ENCODE measurements at regions of chr9 and their contacts with region 1.

Region 1: DNA sequence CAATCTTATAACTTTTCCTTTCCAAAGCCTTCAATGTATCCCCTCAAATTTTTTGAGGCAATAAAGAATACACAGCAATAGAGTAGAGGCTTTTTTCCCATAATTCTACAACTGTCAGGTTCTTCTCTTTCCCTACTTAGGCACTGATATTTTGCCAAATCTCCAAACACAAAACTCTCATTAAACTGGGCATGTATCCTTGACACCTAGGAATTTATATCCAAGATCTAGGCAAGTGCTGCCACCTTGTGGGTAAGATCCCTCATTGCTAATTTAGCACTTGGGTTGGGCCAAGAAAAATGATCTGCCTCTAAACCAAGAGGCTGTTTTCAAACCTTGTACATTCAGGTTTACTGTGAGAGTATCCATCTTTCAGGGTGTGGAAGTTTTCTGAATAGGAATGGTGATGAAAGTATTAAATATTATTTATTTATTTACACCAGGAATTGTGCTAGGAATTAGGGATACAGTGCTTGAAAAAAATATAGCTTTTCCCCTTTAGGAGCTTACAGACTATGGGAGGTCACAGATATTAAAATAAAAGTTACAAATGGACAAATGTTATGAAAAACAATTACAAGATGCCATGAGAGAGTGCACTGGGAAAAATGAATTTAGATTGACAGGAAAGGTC is 17.6 kb downstream of the TSTD2 start:
- DNase-seq: peak; percentile 72
- ATAC-seq: peak; percentile 44
- H3K4me3 Mint-ChIP-seq: no peak overlapping the region
- H3K27ac Mint-ChIP-seq: no peak overlapping the region
- H3K4me1 Mint-ChIP-seq: peaks cover 21% of the 10 kb centered on the region
- H3K27me3 Mint-ChIP-seq: no peaks in the 10 kb centered on the region
- CTCF ChIP-seq: peak; percentile 86

Region 2: DNA sequence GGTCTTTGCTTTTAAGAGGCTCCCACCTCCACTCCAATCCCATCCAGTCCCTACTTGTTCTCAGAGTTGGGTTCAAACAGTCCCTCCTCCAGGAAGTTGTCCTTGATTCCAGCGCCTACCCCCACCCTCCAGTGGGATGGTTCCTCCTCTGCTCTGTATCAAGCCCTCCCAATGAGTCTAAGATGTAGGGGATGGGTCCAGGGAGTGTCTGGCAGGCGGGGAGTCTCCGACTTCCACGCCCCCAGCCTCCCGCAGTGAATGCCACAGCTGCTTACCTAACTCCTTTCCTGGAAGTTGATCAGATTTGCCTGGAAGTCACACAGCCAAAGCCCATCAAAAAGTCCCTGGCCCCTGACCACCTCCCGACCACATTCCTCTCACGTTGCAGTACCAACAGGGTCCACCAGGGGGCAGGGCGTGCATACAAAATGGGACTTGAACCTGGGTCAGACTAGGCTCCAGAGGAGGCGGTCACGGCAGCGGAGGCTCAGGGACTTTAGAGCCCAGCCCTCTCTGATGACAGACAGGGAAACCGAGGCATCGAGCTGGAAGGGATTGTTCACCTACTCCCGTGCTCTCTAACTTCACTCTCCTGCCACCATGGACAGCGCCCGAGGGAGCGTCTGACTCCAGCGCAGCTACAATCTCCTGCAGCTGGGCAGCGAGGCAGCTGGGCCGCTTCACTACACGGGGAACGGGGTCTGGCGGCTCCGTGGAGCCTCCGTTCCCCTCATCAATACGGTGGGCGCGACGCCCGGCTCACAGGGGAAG is 228.6 kb before region 1 on chr9:
- CTCF ChIA-PET with region 1: interaction called, 24 read pairs
- POLR2A ChIA-PET with region 1: no interaction called
- intact Hi-C with region 1: no loop called
- DNase-seq: peak; percentile 87
- ATAC-seq: peak; percentile 68
- H3K4me3 Mint-ChIP-seq: no peak overlapping the region
- H3K27ac Mint-ChIP-seq: no peak overlapping the region
- H3K4me1 Mint-ChIP-seq: peaks cover 12% of the 10 kb centered on the region
- H3K27me3 Mint-ChIP-seq: peaks cover 7% of the 10 kb centered on the region
- CTCF ChIP-seq: peak; percentile 98

Region 3: DNA sequence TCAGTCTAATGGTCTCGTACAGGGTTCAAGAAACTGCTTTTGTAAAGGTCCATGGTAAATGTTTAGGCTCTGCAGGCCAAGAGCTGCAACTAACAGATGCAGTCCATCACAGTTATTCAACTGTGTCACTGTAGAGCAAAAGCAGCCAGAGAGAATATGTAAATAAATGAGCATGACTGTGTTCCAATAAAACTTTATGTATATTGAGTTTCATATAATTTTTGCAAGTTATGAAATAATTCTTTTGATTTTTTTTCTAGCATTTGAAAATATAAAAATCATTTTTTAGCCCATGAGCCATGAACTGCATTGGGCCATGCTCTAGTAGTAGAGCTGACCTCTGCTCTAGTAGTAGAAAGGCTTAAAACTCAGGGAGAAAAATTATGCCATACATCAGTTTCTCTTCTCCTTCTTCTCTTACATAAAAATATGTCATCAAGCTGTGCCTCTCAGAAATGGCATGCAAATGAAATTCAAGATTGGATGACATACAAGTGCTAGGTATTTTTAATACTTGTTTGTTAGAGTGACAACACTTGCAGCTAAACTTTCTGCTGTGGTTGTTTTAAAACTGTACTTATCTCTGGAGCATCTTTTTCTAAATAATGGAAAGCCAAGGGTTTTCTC is 156.3 kb before region 1 on chr9:
- CTCF ChIA-PET with region 1: interaction called, 11 read pairs
- POLR2A ChIA-PET with region 1: no interaction called
- intact Hi-C with region 1: no loop called
- DNase-seq: no peak
- ATAC-seq: no peak
- H3K4me3 Mint-ChIP-seq: no peak overlapping the region
- H3K27ac Mint-ChIP-seq: no peak overlapping the region
- H3K4me1 Mint-ChIP-seq: no peaks in the 10 kb centered on the region
- H3K27me3 Mint-ChIP-seq: no peaks in the 10 kb centered on the region
- CTCF ChIP-seq: no peak

Region 4: DNA sequence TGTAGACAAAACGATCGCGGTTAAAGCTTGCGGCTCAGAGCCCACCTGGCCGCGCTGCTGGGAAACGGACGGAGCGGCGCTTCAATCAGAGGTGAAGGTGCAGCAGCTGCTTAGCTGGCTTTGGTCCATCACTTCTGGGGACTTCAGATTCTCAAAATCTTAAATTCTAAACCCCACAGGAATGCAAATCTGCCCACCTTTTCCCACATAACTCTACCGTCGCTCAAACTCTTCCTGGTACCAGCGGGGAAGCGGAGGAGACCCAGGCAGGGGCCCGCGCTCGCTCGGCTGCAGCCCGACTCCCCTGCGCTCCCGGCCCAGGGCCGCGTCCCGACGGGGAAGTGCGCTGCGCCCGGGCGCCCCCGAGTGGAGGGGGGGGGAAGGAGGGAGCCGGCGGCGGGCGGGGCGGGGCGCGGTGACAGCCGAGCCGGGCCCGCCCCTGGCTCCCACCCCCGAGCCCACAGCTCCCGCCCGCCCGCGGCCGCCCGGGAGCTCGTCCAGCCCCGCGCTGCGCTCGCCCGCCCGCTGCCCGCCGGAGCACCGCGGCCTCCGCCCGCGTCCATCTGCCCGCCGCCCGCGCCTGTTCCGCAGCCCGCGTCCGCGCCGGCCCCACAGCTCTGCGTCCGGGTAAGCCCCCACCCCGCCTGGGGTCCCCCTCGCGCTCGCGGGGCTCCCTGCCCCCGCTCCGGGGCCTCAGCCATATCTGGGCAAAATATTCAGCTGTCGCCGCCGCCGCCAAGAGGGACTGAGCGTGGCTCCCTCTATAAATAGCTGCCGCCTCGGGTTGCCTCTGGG is 114.2 kb before region 1 on chr9 and contains the start of gene TMOD1:
- CTCF ChIA-PET with region 1: interaction called, 15 read pairs
- POLR2A ChIA-PET with region 1: no interaction called
- intact Hi-C with region 1: no loop called
- DNase-seq: peak; percentile 50
- ATAC-seq: peak; percentile 86
- H3K4me3 Mint-ChIP-seq: peak within 1 kb of the TSS; percentile 62
- H3K27ac Mint-ChIP-seq: no peak within 1 kb of the TSS
- H3K4me1 Mint-ChIP-seq: peaks cover 12% of the 10 kb centered on the region
- H3K27me3 Mint-ChIP-seq: peaks cover 47% of the 10 kb centered on the region
- CTCF ChIP-seq: no peak
- total RNA-seq, gene TMOD1: 0.47 to 0.60 TPM

Region 5: DNA sequence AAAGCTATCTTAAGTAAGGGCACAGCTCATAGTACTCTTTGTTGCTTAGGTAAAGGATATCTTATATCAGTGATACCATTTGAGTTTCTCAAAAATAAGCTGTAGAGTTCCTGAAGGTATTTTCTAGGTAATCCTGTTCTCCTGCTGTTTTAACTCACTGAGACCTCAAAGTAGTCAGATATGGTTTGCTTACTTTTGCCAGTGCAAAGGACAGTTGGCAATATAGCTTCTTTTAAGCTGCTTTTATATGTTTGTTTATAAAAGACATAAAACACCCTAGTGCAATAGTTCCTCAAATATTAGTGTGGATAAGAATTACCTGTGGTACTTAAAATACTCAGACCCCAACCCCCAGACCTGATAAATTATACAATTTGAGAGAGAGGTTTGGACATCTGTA is 30.2 kb after region 1 on chr9:
- CTCF ChIA-PET with region 1: interaction called, 12 read pairs
- POLR2A ChIA-PET with region 1: no interaction called
- intact Hi-C with region 1: no loop called
- DNase-seq: no peak
- ATAC-seq: no peak
- H3K4me3 Mint-ChIP-seq: no peak overlapping the region
- H3K27ac Mint-ChIP-seq: no peak overlapping the region
- H3K4me1 Mint-ChIP-seq: peaks cover 3% of the 10 kb centered on the region
- H3K27me3 Mint-ChIP-seq: no peaks in the 10 kb centered on the region
- CTCF ChIP-seq: no peak

Region 6: GRCh38 chr9:97703437-97704344 is 88.1 kb after region 1 on chr9:
- CTCF ChIA-PET with region 1: no interaction called
- POLR2A ChIA-PET with region 1: no interaction called
- intact Hi-C with region 1: no loop called
- DNase-seq: peak; percentile 65
- ATAC-seq: peak; percentile 85
- H3K4me3 Mint-ChIP-seq: peak overlapping the region; percentile 19
- H3K27ac Mint-ChIP-seq: peak overlapping the region; percentile 91
- H3K4me1 Mint-ChIP-seq: peaks cover 17% of the 10 kb centered on the region
- H3K27me3 Mint-ChIP-seq: peaks cover 4% of the 10 kb centered on the region
- CTCF ChIP-seq: no peak

Region 7: DNA sequence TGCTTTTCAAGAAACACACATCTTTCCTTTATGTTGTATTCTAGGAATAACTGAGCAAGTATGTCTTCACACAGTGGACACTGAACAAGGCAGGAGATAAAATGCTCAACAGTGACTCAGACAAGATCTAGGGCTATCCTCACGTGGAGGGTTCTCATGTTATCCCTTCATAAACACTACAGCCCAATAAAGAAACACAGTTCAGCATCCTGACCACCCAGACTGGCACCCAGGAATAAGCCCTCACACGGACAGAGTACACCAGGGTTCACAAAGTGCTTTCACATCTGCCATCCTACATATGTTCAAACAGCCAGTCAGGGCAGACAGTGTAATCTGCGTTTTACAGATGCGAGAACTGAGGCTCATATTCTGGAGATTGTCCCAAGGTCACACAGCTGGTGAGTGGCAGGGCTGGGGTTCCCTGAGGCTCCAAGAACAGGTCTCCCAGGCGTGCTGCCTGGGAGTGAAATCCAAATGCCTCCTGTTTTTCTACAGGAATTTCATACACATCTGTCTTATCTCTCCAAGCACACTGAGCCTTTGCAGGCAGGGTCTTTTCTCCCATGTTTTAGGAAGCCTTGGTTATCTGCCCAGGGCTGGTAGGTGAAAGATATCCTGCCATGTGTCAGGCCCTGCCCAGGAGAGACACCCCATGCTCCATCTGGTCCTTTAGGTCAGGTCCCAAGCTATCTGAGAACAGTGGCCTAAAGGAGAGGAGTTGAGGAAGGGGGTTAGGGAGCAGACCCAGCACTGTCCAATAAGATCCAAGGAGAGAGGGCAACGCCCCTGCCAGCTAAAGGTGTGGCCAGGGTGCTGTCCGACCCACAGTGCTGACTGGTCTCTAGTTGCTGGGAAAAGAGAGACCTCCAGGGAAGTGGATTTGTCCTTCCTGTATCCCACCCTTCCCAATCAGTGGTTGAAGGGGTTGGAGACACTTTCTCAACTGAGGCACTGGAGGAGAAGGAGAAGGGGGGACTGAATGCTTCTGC is 129.4 kb after region 1 on chr9:
- CTCF ChIA-PET with region 1: no interaction called
- POLR2A ChIA-PET with region 1: no interaction called
- intact Hi-C with region 1: no loop called
- DNase-seq: no peak
- ATAC-seq: no peak
- H3K4me3 Mint-ChIP-seq: no peak overlapping the region
- H3K27ac Mint-ChIP-seq: no peak overlapping the region
- H3K4me1 Mint-ChIP-seq: peaks cover 6% of the 10 kb centered on the region
- H3K27me3 Mint-ChIP-seq: peaks cover 42% of the 10 kb centered on the region
- CTCF ChIP-seq: no peak